ENCODE measurements at regions of chr14 and their contacts with region 1.

Region 1: GRCh38 chr14:93184388-93185353 is at the starts of genes LYSET and MOAP1:
- DNase-seq: peak; percentile 63 to 92
- H3K4me3 ChIP-seq: peak within 1 kb of the TSS; percentile 94 to 99
- H3K27ac ChIP-seq: peak within 1 kb of the TSS; percentile 94 to 97
- H3K4me1 ChIP-seq: peaks cover 10 to 13% of the 10 kb centered on the region in 2 donors
- H3K27me3 ChIP-seq: no peaks in the 10 kb centered on the region
- CTCF ChIP-seq: peak in 2 of 3 experiments; percentile 28 to 41
- total RNA-seq, gene LYSET: 2.3 TPM
- total RNA-seq, gene MOAP1: 4.3 TPM

Region 2: DNA sequence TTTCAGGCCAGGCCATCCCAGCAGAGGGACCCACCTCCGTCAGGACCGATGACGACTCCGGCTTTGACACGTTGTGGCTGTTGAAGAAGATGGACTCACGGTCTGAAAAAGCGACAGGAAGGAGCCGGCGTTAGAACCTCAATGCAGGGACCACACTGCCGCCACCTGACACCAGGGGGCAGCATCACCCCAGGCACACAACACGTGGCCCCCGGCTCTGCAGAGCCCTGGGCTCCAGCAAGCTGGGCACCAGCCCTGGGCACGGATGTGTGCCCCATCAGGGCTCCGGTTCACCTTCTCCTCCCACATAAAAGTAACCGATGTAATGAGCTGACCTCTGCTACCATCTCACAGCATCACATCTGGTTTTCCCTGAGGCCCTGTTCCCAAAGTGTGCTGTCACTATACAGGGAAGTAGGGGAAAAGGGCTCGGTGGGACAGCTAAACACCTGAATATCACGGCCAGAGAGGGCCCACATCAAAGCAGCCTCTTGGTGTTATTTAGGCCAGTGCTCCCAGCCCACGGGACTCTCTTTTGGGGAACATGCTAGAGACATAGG is 232.7 kb before region 1 on chr14:
- intact Hi-C with region 1: loop called (anchors 2 kb)
- DNase-seq: peak in 1 of 2 donors; percentile 86
- H3K4me3 ChIP-seq: peak overlapping the region in 1 of 2 donors; percentile 33
- H3K27ac ChIP-seq: peak overlapping the region; percentile 51 to 79
- H3K4me1 ChIP-seq: peaks cover 0 to 25% of the 10 kb centered on the region in 2 donors
- H3K27me3 ChIP-seq: no peaks in the 10 kb centered on the region
- CTCF ChIP-seq: peak; percentile 93 to 97 (median 96)

Region 3: GRCh38 chr14:93042968-93043940 is 141.4 kb before region 1 on chr14:
- intact Hi-C with region 1: loop called (anchors 5 kb)
- DNase-seq: peak in 1 of 2 donors; percentile 91
- H3K4me3 ChIP-seq: no peak overlapping the region
- H3K27ac ChIP-seq: peak overlapping the region; percentile 71 to 85
- H3K4me1 ChIP-seq: peaks cover 18 to 55% of the 10 kb centered on the region in 2 donors
- H3K27me3 ChIP-seq: no peaks in the 10 kb centered on the region
- CTCF ChIP-seq: no peak

Region 4: DNA sequence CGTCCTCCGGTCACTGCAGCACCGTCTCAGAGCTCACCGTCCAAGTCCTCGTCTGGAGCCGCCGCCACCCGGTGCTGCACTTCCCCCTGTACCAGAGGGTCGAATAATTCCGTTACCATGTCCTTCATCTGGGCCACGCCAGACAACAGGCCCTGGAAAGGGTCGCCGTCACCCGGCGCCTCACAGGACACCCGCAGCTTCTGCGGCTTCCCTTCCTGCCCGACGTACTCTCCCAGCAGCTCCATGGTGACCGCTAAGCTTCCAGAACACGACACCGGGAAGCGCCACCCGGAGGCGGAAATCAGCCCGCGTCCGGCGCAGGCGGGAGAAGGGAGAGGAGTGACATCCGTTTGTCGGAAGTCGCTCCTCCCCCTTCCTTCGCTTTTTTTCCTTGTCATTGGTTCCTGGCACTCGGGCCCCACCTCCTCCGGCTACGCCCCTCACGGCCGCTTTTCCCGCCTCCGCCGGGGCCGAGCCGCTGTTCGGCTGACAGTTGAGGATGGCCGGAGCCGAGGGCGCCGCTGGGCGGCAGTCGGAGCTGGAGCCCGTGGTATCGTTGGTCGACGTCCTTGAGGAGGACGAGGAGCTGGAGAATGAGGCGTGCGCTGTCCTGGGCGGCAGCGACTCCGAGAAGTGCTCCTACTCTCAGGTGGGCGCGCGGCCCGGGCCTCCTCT is 22.3 kb after region 1 on chr14 and contains the starts of genes GON7 and UBR7:
- intact Hi-C with region 1: loop called (anchors 1 kb)
- DNase-seq: peak; percentile 78 to 97
- H3K4me3 ChIP-seq: peak within 1 kb of the TSS; percentile 65 to 72
- H3K27ac ChIP-seq: peak within 1 kb of the TSS; percentile 85 to 86
- H3K4me1 ChIP-seq: peaks cover 8 to 11% of the 10 kb centered on the region in 2 donors
- H3K27me3 ChIP-seq: no peaks in the 10 kb centered on the region
- CTCF ChIP-seq: peak in 2 of 3 experiments; percentile 5 to 31
- total RNA-seq, gene GON7: 4.6 TPM
- total RNA-seq, gene UBR7: 8.3 TPM

Region 5: DNA sequence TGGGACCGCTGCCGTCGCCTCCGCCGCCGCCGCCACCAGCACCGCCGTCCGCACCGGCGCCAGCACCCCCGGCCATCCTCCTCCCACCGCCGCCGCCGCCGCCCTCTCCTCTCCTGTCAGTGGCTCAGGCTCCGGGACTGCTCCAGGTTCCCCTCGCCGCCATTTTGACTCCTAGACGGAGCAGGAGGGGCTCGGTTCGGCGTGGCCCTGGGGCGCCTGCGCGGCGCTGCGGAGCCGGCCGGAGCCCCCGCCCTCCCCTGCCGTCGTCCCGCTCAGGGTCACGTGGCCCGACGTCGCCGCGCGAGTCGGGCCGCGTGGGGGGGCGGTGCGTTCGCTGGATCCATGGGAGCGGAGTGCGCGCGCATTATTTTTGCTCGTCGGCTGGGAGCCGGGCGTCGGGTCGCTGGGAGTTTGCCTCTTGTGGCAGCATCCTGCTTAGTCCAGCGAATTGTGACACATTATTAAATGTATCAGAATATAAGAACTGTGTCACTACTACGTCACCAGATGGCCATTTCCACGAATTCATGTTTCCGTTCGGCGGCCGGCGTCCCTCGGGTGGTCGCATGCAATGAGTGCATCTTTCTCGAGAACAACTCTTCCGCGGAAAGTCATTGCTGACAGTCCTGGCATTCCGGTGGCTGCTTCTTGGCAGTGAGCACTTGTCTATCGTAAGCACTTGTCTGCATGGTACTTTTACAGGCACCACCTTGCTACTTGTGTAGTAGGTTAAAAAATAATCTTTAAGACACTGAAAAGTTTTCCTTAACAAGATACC is 148.4 kb after region 1 on chr14 and contains the start of gene BTBD7:
- intact Hi-C with region 1: loop called (anchors 2 kb)
- DNase-seq: peak; percentile 73 to 97
- H3K4me3 ChIP-seq: peak within 1 kb of the TSS; percentile 85 to 91
- H3K27ac ChIP-seq: peak within 1 kb of the TSS; percentile 86 to 97
- H3K4me1 ChIP-seq: peaks cover 0 to 25% of the 10 kb centered on the region in 2 donors
- H3K27me3 ChIP-seq: no peaks in the 10 kb centered on the region
- CTCF ChIP-seq: peak in 1 of 3 experiments; percentile 9
- total RNA-seq, gene BTBD7: 17.2 TPM